ENCODE measurements at regions of chr13 and their contacts with region 1.

Region 1: DNA sequence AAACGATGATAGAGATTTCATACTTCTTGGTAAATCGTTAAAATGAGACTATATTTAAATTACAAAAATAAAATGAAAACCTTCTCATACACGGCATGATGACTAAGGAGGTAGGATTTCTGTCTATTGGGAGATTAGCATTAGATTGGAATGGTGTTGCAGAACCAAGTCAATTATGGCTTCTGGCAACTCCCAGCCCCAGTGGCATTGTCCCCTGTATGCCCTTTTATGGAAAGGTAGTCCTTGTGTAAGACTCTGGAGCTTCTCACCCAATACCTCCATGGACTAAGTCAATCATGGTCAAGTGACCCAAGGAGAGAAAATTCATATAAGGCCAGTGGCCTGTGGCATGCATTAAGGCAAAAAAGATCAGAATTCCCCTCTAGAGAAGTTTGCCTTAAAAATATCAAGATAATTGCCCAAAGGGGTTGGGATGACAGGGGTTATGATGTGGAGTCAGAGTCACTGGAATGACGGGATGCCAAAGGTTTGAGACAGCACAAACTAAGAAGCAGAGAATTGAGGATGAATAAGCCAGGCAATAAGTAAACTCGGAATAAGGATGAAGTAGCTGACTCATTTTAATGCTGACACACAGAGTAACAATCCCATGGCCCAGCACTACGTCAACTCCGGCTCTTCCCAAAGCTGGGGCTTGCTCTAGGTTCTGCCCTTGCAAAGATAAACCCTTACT is 57.8 kb upstream of the POSTN start:
- DNase-seq: peak; percentile 51 to 88
- H3K4me3 ChIP-seq: no peak overlapping the region
- H3K27ac ChIP-seq: peak overlapping the region; percentile 79
- H3K4me1 ChIP-seq: peaks cover 22% of the 10 kb centered on the region
- H3K27me3 ChIP-seq: no peaks in the 10 kb centered on the region
- CTCF ChIP-seq: no peak

Region 2: GRCh38 chr13:37306778-37307544 is 349.4 kb before region 1 on chr13:
- CTCF ChIA-PET with region 1: no interaction called
- POLR2A ChIA-PET with region 1: no interaction called
- intact Hi-C with region 1: no loop called
- DNase-seq: peak in 1 of 2 experiments; percentile 1
- H3K4me3 ChIP-seq: no peak overlapping the region
- H3K27ac ChIP-seq: no peak overlapping the region
- H3K4me1 ChIP-seq: 0 out of 2 replicates have a peak, but pooled peaks cover 7% of the 10 kb centered on the region
- H3K27me3 ChIP-seq: no peaks in the 10 kb centered on the region
- CTCF ChIP-seq: no peak

Region 3: GRCh38 chr13:37595162-37595561 is 61.2 kb before region 1 on chr13:
- CTCF ChIA-PET with region 1: no interaction called
- POLR2A ChIA-PET with region 1: no interaction called
- intact Hi-C with region 1: no loop called
- DNase-seq: no peak
- H3K4me3 ChIP-seq: no peak overlapping the region
- H3K27ac ChIP-seq: no peak overlapping the region
- H3K4me1 ChIP-seq: no peaks in the 10 kb centered on the region
- H3K27me3 ChIP-seq: no peaks in the 10 kb centered on the region
- CTCF ChIP-seq: no peak

Region 4: GRCh38 chr13:37617161-37617560 is 39.2 kb before region 1 on chr13:
- CTCF ChIA-PET with region 1: no interaction called
- POLR2A ChIA-PET with region 1: no interaction called
- intact Hi-C with region 1: loop called (anchors 1 kb)
- DNase-seq: peak; percentile 14 to 91
- H3K4me3 ChIP-seq: no peak overlapping the region
- H3K27ac ChIP-seq: peak overlapping the region; percentile 74
- H3K4me1 ChIP-seq: peaks cover 32% of the 10 kb centered on the region
- H3K27me3 ChIP-seq: no peaks in the 10 kb centered on the region
- CTCF ChIP-seq: no peak

Region 5: DNA sequence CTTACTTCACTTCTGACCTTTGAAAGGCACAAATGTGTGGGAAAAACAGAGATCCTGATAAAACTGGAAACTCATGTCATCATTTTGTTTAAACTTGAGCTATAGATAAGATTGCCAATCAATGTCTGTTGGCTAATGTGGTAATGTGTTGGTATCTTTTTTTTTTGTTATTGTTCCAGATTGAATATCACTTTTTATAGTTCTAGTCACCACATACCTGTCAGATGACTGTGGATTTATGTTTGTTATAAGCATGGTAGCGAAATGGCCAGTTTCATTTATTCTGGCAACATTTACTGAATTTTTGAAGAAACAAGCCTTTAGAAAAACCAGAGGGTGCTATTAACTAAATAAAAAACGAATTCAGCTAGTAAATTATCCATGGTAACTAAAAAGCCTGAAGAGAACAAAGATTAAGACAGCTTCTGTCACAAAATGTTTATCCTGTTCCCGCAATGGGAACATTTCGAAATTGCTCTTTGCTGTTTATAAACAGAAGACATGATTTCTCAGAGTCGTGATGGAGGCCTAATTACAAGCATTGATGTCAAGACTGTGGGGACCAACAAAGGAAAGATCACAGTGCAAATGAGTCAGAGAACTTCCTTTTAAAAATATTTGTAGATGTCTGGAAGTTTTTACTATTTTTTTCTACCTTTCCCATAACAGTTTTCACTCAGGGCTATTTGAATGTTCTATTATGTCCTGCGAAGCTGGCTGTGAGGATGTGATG is 25.1 kb after region 1 on chr13:
- CTCF ChIA-PET with region 1: no interaction called
- POLR2A ChIA-PET with region 1: no interaction called
- intact Hi-C with region 1: no loop called
- DNase-seq: no peak
- H3K4me3 ChIP-seq: no peak overlapping the region
- H3K27ac ChIP-seq: no peak overlapping the region
- H3K4me1 ChIP-seq: no peaks in the 10 kb centered on the region
- H3K27me3 ChIP-seq: no peaks in the 10 kb centered on the region
- CTCF ChIP-seq: no peak

Region 6: GRCh38 chr13:37715606-37716015 is 59.2 kb after region 1 on chr13:
- CTCF ChIA-PET with region 1: no interaction called
- POLR2A ChIA-PET with region 1: no interaction called
- intact Hi-C with region 1: loop called (anchors 1 kb)
- DNase-seq: peak; percentile 7 to 82
- H3K4me3 ChIP-seq: no peak overlapping the region
- H3K27ac ChIP-seq: no peak overlapping the region
- H3K4me1 ChIP-seq: peaks cover 18% of the 10 kb centered on the region
- H3K27me3 ChIP-seq: no peaks in the 10 kb centered on the region
- CTCF ChIP-seq: no peak

Region 7: DNA sequence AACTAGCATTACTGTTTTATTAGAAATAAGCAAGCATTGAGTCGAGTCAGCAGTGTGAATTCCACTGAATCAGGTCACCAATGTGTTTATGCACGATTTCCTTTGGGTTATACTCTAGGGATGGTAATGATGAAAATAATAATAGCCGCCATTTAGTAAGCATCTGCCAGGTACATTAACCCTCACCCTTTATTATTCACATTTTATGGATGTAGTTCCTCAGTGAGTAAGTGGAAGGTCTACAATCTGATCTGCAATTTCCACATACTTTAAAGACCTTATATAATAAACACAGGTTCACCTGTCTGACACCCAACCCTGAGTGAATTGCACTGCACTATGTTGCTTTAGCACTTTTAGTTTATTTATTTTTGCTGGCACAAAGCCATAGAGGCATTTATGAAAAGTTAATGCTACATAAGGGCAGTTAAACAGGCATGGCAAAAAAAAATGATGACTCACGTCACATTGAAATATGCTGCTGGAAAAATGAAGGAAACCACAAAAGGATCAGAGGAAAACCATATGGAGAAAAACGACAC is 90.7 kb after region 1 on chr13:
- CTCF ChIA-PET with region 1: no interaction called
- POLR2A ChIA-PET with region 1: interaction called, 5 read pairs
- intact Hi-C with region 1: loop called (anchors 1 kb)
- DNase-seq: peak; percentile 29 to 83
- H3K4me3 ChIP-seq: no peak overlapping the region
- H3K27ac ChIP-seq: peak overlapping the region; percentile 73
- H3K4me1 ChIP-seq: peaks cover 17% of the 10 kb centered on the region
- H3K27me3 ChIP-seq: no peaks in the 10 kb centered on the region
- CTCF ChIP-seq: no peak